ENCODE measurements at regions of chr15 and their contacts with region 1.

Region 1: GRCh38 chr15:51649659-51650521 is 27.3 kb upstream of the DMXL2 start:
- H3K4me3 Mint-ChIP-seq: no peak overlapping the region
- H3K27ac Mint-ChIP-seq: peak overlapping the region; percentile 55
- H3K4me1 Mint-ChIP-seq: peaks cover 12% of the 10 kb centered on the region
- H3K27me3 Mint-ChIP-seq: no peaks in the 10 kb centered on the region

Region 2: GRCh38 chr15:51622604-51623370 is 27.1 kb before region 1 on chr15 and contains the start of gene DMXL2:
- intact Hi-C with region 1: loop called (anchors 1 kb)
- H3K4me3 Mint-ChIP-seq: peak within 1 kb of the TSS; percentile 99
- H3K27ac Mint-ChIP-seq: peak within 1 kb of the TSS; percentile 100
- H3K4me1 Mint-ChIP-seq: peaks cover 55% of the 10 kb centered on the region
- H3K27me3 Mint-ChIP-seq: no peaks in the 10 kb centered on the region

Region 3: DNA sequence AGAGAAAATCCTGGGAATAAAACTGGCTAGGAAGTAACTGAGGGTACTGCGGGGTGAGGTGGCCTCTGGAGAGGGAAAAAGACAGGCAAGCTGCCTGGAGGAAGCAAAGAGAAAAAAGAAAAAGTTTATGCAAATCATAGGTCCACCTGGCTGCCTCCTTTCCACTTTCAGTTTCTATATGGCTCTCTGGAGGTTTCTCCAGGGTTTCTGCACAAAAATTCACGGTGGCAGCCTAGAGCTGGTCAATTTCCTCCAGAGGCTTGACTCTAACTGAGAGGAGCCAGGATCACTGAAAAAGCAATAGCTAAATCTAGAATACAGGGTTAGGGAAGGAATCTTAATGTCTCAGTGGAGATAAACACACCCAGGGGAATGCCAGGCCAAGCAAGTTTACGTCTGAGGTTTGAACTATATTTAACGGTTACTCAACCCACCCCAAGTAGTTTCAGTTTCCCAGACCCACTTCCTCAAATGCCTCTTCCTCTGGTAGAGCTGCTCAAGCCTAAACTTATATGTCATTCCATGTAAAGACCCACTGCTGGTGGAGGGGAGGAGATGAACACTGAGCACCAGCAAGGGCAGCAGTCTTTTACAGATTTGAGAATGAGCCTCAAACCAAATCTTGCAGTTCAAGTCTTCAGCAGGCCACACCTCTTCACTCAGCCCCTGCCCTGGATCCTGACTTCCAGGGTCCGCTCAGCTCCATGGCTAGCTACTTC is 81.8 kb after region 1 on chr15:
- intact Hi-C with region 1: loop called (anchors 5 kb)
- H3K4me3 Mint-ChIP-seq: peak overlapping the region; percentile 68
- H3K27ac Mint-ChIP-seq: peak overlapping the region; percentile 70
- H3K4me1 Mint-ChIP-seq: peaks cover 73% of the 10 kb centered on the region
- H3K27me3 Mint-ChIP-seq: peaks cover 12% of the 10 kb centered on the region

Region 4: DNA sequence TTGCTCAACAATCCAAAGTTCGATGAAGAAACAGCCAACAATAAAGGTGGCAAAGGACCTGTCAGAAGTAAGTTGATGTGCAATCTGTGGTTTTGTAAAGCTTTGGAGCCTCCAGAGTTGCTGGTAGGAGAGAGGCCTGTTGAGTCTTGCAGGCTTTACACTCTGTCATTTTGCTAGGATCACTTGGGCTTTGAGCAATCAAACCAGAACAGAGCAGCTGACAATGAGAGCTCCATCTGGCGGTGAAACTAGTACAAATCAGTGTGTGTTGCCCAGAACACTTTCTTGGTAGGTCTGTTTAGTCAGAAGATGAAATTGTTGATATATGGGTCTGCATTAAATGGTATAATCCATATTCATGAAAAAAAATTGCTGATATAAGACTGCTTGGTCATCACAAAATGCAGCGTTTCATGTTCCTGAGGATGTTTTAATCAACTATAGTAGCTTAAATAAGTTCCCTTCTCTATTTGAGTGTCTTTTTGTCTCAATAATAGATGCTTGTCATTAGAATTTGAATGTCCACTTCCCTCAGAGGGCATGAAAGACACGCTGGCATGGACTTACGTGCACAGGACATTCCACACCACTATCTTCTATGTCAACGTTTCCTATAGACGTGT is 127.2 kb after region 1 on chr15:
- intact Hi-C with region 1: loop called (anchors 1 kb)
- H3K4me3 Mint-ChIP-seq: no peak overlapping the region
- H3K27ac Mint-ChIP-seq: no peak overlapping the region
- H3K4me1 Mint-ChIP-seq: peaks cover 15% of the 10 kb centered on the region
- H3K27me3 Mint-ChIP-seq: no peaks in the 10 kb centered on the region

Measured in dendritic cell treated with granulocyte-macrophage colony-stimulating factor and Interleukin-4, amounts not matched to agents 40 ng/mL and 50 ng/mL, for 4 days (primary cell).